ENCODE measurements at regions of chr14 and their contacts with region 1.

Region 1: GRCh38 chr14:106210652-106211051 is 684.3 kb downstream of the TMEM121 start:
- DNase-seq: peak; percentile 59 to 64
- H3K4me3 ChIP-seq: no peak overlapping the region
- H3K4me3 Mint-ChIP-seq: no peak overlapping the region
- H3K27ac Mint-ChIP-seq: peak overlapping the region; percentile 81
- H3K4me1 ChIP-seq: peaks cover 39% of the 10 kb centered on the region
- H3K4me1 Mint-ChIP-seq: peaks cover 37% of the 10 kb centered on the region
- H3K27me3 ChIP-seq: no peaks in the 10 kb centered on the region
- H3K27me3 Mint-ChIP-seq: no peaks in the 10 kb centered on the region
- CTCF ChIP-seq: peak; percentile 21 to 50

Region 2: DNA sequence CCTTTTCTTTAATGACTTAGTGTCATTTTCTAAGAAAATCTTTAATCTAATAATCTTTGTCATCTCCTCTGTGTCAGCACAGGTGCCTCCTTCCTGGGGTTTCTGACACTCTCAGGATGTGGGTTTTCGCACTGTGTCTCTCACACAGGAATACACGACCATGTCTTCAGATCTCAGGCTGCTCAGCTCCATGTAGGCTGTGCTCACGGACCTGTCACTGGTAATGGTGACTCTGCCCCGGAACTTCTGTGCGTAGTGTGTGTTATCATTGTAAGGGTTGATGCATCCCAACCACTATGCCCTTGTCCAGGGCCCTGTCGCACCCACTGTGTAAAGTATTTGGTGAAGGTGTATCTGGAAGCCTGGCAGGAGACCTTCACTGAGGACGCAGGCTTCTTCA is 36.4 kb before region 1 on chr14:
- CTCF ChIA-PET with region 1: interaction called, 4 read pairs
- POLR2A ChIA-PET with region 1: no interaction called
- intact Hi-C with region 1: loop called (anchors 1 kb)
- DNase-seq: no peak
- H3K4me3 ChIP-seq: no peak overlapping the region
- H3K4me3 Mint-ChIP-seq: no peak overlapping the region
- H3K27ac Mint-ChIP-seq: no peak overlapping the region
- H3K4me1 ChIP-seq: no peaks in the 10 kb centered on the region
- H3K4me1 Mint-ChIP-seq: peaks cover 7% of the 10 kb centered on the region
- H3K27me3 ChIP-seq: no peaks in the 10 kb centered on the region
- H3K27me3 Mint-ChIP-seq: no peaks in the 10 kb centered on the region
- CTCF ChIP-seq: no peak

Region 3: GRCh38 chr14:106185837-106186233 is 24.8 kb before region 1 on chr14:
- CTCF ChIA-PET with region 1: interaction called, 3 read pairs
- POLR2A ChIA-PET with region 1: no interaction called
- intact Hi-C with region 1: loop called (anchors 2 kb)
- DNase-seq: no peak
- H3K4me3 ChIP-seq: no peak overlapping the region
- H3K4me3 Mint-ChIP-seq: peak overlapping the region; percentile 9
- H3K27ac Mint-ChIP-seq: peak overlapping the region; percentile 42
- H3K4me1 ChIP-seq: peaks cover 48% of the 10 kb centered on the region
- H3K4me1 Mint-ChIP-seq: peaks cover 41% of the 10 kb centered on the region
- H3K27me3 ChIP-seq: no peaks in the 10 kb centered on the region
- H3K27me3 Mint-ChIP-seq: no peaks in the 10 kb centered on the region
- CTCF ChIP-seq: no peak

Region 4: DNA sequence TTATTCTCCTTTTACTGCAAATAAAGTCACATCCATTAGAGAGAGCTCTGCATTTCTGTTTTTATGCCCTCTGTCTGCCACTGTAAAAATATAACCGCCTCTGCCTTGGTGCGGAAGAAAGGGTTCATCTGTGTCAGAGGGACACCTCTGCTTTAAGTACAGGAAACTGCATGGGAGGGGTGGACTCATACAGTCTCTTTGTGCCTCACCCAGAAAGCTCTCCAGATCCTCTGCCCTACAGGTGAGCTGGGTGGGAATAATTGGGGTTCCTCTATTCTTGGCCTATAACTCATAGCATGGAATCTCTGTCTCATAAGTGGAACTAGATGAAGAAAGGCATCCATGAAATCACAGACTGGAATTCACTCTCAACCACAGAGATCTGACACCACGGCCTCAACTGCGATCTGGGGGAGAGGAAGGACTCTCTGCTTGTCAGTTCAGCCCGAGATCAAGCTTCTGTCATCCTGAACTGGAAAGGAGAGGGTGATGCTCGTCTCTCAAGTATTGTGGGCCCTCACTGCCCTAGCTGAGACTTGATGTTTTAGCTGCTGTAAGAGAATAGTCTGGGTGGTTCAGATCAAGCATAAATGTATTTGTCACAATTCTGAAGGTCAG is 18.0 kb after region 1 on chr14:
- CTCF ChIA-PET with region 1: no interaction called
- POLR2A ChIA-PET with region 1: no interaction called
- intact Hi-C with region 1: no loop called
- DNase-seq: no peak
- H3K4me3 ChIP-seq: no peak overlapping the region
- H3K4me3 Mint-ChIP-seq: no peak overlapping the region
- H3K27ac Mint-ChIP-seq: no peak overlapping the region
- H3K4me1 ChIP-seq: no peaks in the 10 kb centered on the region
- H3K4me1 Mint-ChIP-seq: no peaks in the 10 kb centered on the region
- H3K27me3 ChIP-seq: no peaks in the 10 kb centered on the region
- H3K27me3 Mint-ChIP-seq: no peaks in the 10 kb centered on the region
- CTCF ChIP-seq: no peak